ENCODE measurements at regions of chr9 and their contacts with region 1.

Region 1: DNA sequence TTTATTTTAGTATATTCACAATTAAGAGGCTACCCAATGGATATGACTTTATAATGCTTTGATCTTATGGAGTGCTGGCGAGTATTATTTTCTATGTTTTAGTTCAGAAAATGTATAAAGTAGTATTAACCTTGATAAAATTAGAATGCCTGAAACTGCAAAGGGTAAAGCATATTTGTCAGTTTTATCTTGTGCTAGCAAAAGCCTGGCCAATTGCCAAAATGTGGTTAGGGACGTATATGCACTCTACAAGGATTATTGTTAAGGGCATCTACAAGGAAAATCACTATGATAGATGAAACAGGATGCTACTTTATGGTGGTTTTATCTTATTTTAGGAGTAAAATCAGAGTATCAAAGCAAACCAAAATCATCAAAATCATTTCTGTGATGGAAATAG is 281.7 kb downstream of the CCDC171 start:
- DNase-seq: no peak
- ATAC-seq: no peak
- H3K4me3 ChIP-seq: no peak overlapping the region
- H3K27ac ChIP-seq: no peak overlapping the region
- H3K4me1 ChIP-seq: no peaks in the 10 kb centered on the region
- H3K27me3 ChIP-seq: no peaks in the 10 kb centered on the region
- CTCF ChIP-seq: no peak

Region 2: DNA sequence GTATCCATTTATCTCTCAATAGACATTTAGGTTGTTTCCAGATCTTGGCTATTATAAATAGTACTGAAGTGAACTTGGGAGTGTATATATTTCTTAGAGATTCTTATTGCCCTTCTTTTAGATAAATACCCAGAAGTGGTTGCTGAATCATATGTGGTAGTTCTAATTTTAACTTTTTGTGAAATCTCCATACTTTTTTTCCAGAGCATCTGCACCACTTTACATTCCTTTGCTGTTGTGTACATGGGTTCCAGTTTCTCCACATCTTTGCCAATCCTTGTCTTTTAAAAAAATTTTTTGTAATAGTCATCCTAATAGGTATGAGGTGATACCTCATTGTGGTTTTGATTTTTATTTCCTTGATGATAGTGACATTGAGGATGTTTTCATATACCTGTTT is 22.1 kb after region 1 on chr9:
- CTCF ChIA-PET with region 1: no interaction called
- POLR2A ChIA-PET with region 1: no interaction called
- in situ Hi-C with region 1: no loop called
- intact Hi-C with region 1: no loop called
- DNase-seq: no peak
- ATAC-seq: no peak
- H3K4me3 ChIP-seq: no peak overlapping the region
- H3K27ac ChIP-seq: no peak overlapping the region
- H3K4me1 ChIP-seq: no peaks in the 10 kb centered on the region
- H3K27me3 ChIP-seq: no peaks in the 10 kb centered on the region
- CTCF ChIP-seq: no peak

Region 3: GRCh38 chr9:17052626-17053025 is 1218.1 kb after region 1 on chr9:
- CTCF ChIA-PET with region 1: interaction called, 13 read pairs
- POLR2A ChIA-PET with region 1: no interaction called
- in situ Hi-C with region 1: no loop called
- intact Hi-C with region 1: no loop called
- DNase-seq: no peak
- ATAC-seq: no peak
- H3K4me3 ChIP-seq: no peak overlapping the region
- H3K27ac ChIP-seq: no peak overlapping the region
- H3K4me1 ChIP-seq: no peaks in the 10 kb centered on the region
- H3K27me3 ChIP-seq: no peaks in the 10 kb centered on the region
- CTCF ChIP-seq: no peak

Measured in Panc1 (cell line).